Activated naive CD4-positive, alpha-beta T cell treated with anti-CD3 and anti-CD28 coated beads for 36 hours (primary cell): ENCODE measurements at regions of chr22 and their contacts with region 1.

Region 1: GRCh38 chr22:30305519-30305905 is 16.2 kb upstream of the CASTOR1 start:
- DNase-seq: peak; percentile 78
- H3K4me3 Mint-ChIP-seq: peak overlapping the region; percentile 70
- H3K27ac Mint-ChIP-seq: peak overlapping the region; percentile 97
- H3K4me1 Mint-ChIP-seq: peaks cover 98% of the 10 kb centered on the region
- H3K27me3 Mint-ChIP-seq: no peaks in the 10 kb centered on the region

Region 2: DNA sequence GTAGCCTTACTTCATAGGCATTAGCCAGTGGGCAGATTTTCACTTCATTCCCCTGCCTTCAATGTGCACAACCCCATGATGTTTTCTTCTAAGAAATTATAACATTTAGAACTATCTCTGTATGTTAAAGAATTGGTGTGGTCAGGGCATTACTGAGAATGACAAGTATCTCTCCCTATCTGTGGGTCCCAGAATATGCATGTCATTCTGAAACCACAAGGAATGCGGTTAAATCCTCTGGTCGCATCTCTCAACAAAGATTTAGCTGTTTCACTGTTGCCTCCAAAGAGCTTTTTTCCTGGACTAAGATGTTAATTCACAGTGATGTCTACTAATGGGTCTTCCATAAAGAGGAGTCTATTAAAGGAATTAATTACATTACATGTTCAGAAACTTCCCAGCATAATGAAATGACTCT is 121.6 kb before region 1 on chr22:
- CTCF ChIA-PET with region 1: no interaction called
- intact Hi-C with region 1: loop called (anchors 5 kb)
- DNase-seq: no peak
- H3K4me3 Mint-ChIP-seq: no peak overlapping the region
- H3K27ac Mint-ChIP-seq: peak overlapping the region; percentile 93
- H3K4me1 Mint-ChIP-seq: peaks cover 87% of the 10 kb centered on the region
- H3K27me3 Mint-ChIP-seq: no peaks in the 10 kb centered on the region

Region 3: DNA sequence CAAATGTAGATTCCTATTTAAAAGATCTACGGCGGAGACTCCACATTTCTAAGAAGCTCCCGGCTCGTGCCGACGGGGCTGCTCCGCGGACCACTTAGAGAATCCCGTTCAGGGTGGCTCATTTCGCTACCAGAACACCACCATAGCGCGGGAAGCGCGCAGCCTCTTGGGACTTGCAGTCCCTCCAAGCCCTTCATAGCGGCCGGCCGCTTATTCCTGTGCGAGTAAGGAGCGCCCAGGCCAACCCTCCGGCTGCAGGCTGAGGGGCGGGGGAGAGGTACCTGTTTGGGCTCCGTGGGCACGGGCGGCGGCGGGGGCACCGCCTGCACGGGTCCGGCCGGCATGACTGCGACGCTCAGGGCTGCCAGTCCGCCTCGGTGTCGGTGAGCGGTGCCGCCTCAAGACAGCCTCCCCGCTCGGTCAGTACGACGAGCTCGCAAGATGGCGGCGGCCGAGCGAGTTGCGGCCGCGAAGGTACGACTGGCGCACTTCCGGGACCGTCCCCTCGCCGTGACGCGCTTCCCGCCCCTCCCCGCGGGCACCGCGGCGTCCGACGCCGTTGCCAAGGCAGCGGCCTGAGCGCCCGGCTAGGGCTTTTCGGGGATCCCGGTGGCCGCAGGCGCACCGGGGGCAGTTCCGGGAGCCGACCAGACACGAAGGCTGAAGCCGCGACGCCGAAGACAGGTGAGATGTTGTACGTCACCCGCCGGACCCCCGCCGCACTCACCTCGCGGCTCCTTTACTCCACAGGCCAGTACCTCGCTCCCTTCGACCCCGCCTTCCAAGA is 51.1 kb after region 1 on chr22 and contains the starts of genes CCDC157 and SF3A1:
- CTCF ChIA-PET with region 1: interaction called, 3 read pairs
- intact Hi-C with region 1: loop called (anchors 1 kb)
- DNase-seq: peak; percentile 87
- H3K4me3 Mint-ChIP-seq: peak within 1 kb of the TSS; percentile 92
- H3K27ac Mint-ChIP-seq: peak within 1 kb of the TSS; percentile 84
- H3K4me1 Mint-ChIP-seq: peaks cover 50% of the 10 kb centered on the region
- H3K27me3 Mint-ChIP-seq: no peaks in the 10 kb centered on the region
- total RNA-seq, gene CCDC157: 1.1 to 1.5 TPM
- total RNA-seq, gene SF3A1: 274 to 276 TPM

Region 4: DNA sequence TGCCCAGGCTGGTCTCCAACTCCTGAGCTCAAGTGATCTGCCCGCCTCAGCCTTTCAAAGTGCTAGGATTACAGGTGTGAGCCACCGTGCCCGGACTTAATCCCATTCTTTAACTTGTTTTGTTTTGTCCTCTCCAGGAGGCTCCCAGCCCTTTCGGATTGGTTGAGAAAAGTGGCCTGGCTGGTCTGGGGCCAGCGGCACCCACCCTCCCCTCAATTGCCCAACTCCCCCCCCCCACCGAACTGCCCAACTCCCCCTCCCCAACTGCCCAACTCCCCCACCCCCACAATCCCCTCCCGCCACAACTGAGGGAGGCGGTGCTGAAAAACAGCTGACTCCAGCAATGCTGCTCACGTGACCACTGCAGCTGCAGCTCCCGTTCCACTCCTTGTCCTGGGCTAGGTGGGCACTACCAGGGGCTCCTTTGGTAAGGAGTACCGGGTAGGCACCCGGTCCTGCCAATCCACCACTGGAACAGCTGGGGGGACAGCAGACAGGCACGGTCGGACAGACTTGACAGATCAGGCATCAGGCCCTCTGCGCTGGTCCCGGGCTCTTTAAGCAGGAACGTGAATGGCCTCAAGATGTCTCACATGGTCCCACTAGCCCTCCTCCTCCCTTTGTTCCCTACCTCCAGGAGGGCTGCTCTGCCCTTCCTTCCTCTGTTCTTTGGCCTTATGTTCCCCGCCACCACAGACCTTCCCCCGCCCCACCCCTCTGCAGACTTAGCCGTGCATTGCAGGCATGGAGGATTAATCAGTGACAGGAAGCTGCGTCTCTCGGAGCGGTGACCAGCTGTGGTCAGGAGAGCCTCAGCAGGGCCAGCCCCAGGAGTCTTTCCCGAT is 301.2 kb after region 1 on chr22 and contains the start of gene TCN2:
- CTCF ChIA-PET with region 1: no interaction called
- intact Hi-C with region 1: loop called (anchors 10 kb)
- DNase-seq: peak; percentile 78
- H3K4me3 Mint-ChIP-seq: peak within 1 kb of the TSS; percentile 74
- H3K27ac Mint-ChIP-seq: no peak within 1 kb of the TSS
- H3K4me1 Mint-ChIP-seq: peaks cover 33% of the 10 kb centered on the region
- H3K27me3 Mint-ChIP-seq: no peaks in the 10 kb centered on the region
- total RNA-seq, gene TCN2: 0.19 to 0.22 TPM